AG04449 (cell line): ENCODE measurements at regions of chr3 and their contacts with region 1.

Region 1: GRCh38 chr3:185572183-185572582 is 13.9 kb upstream of the SENP2 start:
- DNase-seq: no peak
- H3K4me3 ChIP-seq: no peak overlapping the region
- CTCF ChIP-seq: no peak

Region 2: DNA sequence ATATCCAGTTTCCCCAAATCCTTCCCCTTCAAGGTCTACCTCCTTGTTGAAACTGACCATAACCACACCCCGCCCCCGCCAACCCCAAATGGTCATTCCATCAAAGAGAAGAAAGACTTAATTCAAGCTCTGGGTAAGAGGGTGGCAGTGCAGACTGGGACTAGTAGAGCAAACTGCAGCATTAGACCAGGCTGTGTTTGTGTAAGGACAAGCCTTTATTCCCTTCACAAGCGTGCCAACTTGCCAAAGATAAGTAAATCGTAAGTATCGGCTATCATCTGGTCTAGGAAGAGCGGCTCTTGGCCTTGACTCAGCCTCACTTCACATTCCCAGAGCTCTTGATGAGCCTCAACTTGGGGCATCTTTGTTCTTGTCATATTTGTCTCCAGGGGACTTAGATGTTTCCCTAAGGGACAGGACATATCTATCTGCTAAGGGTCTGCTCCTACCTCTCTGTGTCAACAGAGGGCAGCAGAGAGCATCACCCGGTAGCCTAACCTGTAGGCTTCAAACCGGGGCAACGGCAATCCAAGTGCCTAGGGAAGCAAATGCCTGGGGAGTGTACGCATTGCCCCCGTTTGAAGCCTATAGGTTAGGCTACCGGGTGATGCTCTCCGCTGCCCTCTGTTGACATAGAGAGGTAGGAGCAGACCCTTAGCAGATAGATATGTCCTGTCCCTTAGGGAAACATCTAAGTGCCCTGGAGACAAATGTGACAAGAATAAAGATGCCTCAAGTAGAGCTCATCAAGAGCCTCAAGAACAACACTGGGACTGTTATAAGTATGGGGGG is 218.2 kb before region 1 on chr3:
- CTCF ChIA-PET with region 1: interaction called, 11 read pairs
- POLR2A ChIA-PET with region 1: no interaction called
- DNase-seq: no peak
- H3K4me3 ChIP-seq: no peak overlapping the region
- CTCF ChIP-seq: peak; percentile 58

Region 3: DNA sequence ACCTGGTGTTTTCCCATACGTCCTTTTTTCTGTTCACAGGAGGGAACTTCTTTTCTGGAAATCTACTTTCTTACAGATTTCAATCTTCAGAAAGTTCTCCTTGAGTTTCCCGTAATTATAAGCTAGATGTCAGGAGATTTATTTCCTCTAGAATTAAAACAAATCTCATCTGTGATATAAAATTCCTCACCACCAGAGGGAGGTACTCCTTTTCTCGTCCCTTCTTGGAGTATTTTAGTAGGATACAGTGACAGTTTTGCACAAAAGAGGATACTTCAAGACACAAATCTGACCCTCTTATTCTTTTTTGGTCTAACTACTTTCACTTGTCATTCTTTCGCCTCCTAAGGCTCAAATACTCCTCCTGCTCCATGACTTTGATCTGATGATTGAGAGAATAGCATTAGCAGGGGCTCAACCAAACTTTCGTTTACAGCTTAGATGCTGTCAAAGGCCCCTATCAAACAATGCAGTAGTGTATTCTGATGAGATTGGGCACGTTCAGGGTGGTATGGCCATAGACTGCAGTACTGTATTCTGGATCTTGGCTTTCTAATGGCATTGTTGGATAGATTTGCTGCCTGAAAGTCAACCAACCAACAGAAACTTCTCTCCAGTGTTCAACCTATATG is 111.3 kb before region 1 on chr3:
- CTCF ChIA-PET with region 1: interaction called, 72 read pairs
- POLR2A ChIA-PET with region 1: no interaction called
- DNase-seq: no peak
- H3K4me3 ChIP-seq: no peak overlapping the region
- CTCF ChIP-seq: peak; percentile 22

Region 4: GRCh38 chr3:185537369-185537970 is 34.7 kb before region 1 on chr3:
- CTCF ChIA-PET with region 1: interaction called, 14 read pairs
- POLR2A ChIA-PET with region 1: no interaction called
- DNase-seq: peak; percentile 23
- H3K4me3 ChIP-seq: no peak overlapping the region
- CTCF ChIP-seq: no peak

Region 5: DNA sequence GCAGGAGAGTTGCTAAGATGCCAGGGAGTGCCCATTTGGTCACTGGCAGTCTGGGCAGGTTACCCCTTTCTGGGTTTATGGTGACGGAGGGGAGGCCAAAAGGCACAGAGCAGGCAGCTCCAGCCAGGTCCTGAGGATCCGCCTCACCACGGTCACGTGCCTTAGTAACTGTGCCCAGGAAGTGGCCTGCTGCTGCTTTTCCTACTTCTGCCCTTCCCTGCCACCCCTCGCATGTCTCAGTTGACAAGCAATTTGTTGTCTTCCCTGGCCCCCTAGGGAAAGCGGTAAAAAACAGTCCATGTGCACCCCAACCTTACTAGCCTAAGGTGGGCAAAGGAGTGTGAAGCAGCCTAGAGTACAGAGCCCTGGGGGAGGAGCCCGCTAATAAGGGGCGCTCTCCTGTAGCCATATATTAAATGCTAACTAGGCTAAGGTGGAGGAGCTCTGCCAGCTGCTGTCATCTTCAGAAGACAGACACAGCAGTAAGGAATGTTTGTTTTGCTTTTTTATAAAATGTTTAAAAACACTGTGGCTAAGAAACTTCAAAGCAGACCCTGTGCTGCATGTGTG is 10.7 kb before region 1 on chr3:
- CTCF ChIA-PET with region 1: interaction called, 53 read pairs
- POLR2A ChIA-PET with region 1: no interaction called
- DNase-seq: no peak
- H3K4me3 ChIP-seq: no peak overlapping the region
- CTCF ChIP-seq: no peak

Region 6: DNA sequence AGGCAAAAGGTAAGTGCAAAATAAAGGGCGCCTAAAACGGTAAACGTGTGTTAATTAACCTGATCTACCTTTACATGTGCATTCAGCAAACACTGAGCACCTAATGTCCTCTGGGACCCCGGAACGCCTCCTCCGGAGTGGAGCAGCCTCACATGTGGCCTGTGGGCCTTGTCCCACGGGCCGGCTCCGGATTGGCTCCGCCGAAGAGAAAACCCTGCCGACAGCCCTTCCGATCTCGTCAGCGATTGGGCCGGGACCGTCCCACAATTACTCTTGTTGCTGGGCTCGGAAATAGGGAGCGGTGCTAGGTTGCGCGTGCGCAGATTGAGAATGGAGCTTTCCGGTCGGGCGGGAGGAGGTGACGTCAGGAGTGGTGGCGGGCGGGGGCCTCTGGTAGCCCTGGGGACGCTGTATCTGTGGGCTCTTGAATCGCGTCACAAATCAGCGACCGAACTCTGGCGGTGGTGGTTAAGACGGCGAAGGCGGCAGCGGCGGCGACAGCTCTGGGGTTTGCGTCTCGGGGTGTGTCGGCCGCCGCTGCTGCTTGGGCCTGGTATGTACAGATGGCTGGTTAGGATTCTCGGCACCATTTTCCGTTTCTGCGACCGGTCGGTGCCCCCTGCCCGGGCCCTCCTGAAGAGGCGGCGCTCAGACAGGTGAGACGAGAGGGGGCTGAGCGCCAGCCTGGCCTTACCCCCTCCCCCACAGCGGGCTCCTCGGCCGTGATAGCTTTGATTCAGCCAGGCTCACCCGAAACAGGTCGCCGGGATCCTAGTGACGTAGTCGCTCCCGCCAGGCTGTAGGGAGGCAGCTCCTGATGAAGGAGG is 13.9 kb after region 1 on chr3 and contains the start of gene SENP2:
- CTCF ChIA-PET with region 1: interaction called, 47 read pairs
- POLR2A ChIA-PET with region 1: no interaction called
- DNase-seq: peak; percentile 87
- H3K4me3 ChIP-seq: peak within 1 kb of the TSS; percentile 94
- CTCF ChIP-seq: no peak

Region 7: DNA sequence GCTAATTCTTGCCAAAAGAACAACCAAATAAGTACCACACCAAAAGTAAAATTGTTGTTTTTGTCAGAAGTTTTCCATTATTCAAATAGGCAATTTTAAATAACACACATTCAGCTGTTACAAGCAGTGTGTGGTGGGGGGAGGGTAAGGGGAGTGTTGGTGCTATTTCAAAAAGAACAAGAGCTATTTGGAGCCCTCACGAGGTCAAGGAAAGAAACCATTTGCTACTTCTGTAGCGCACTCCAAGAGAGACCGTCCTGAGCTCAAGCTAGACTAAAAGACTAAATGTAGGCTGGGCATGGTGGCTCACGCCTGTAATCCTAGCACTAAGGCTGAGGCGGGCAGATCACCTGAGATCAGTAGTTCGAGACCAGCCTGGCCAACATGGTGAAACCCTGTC is 273.9 kb after region 1 on chr3:
- CTCF ChIA-PET with region 1: no interaction called
- POLR2A ChIA-PET with region 1: no interaction called
- DNase-seq: no peak
- H3K4me3 ChIP-seq: no peak overlapping the region
- CTCF ChIP-seq: no peak